ENCODE measurements at regions of chr21 and their contacts with region 1.

Region 1: DNA sequence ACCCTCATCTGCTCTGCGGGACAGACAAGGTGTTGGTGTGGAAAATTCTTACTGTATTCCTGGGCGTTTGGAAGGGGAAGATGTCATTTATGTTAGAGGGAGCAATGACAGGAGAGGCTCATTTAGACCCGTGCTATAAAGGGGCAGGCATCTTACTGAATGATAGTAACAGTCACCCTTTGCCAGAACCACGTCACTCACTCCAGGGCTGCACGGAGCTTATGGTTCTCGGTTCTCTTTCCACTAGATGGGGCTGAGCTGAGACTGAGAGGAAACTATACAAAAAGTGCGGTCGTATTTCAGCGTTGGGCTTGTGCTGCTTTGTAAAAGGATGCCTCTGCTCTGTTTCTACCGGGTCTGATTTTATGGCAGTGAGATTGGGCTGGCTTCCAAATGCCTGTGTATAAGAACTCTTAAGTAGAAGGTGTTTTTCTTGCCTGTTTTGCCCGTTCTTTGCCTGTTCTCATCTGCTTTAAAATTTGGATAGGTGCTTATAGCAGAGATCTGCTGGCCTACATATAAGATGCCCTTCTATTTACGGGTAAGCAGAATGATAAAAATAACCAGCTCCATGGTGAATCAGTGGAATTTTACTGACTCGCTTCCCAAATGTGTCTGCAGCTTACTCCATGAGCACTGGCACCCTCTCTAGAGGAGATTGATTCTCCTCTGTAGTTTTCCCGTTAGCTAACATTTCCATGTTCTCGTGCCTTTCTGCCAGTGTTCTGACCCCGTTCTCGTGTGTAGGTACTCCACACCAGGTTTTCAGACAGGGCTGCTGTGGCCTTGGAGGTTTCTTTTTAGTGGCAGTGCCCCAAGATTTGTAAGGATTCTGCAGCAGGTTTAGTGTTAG is 55.9 kb downstream of the MRPS6 start:
- DNase-seq: no peak

Region 2: DNA sequence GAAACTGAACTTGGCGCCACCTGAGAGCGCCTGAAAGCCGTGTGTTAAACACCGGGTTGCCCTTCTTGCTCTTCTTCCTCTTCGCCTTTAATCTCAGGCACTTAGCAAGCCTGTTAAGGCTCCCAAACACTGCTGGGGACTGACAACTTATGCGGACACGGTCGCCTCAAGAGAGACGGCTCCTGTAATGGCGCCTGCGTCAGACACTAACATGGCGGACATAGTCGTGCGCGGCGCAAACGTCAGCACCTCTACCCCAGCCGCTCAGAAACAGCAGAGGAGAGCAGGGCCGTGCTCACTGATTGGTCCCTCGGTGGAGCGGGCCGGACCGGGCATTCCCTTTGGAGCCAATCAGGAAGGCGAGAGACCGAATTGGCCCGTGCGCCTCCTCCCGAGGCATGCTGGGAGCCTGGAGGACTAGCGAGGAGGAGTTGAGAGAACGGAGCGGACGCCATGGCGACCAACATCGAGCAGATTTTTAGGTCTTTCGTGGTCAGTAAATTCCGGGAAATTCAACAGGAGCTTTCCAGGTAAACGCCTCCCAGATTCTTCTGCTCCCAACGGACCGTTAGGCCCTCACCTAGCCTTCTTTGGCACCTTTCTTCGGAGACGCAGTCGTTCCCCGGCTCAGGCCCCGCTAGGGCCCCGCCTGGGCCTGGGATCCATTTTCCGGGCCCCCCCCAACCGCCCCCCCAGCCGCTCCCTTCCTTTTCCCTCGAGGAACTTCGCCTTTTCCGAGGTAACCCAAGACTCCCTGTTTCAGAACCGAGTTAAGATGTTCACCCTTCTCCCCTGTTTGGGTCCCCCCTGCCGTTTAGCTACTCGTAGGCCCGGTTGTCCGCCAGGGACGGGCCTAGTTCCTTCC is 586.4 kb before region 1 on chr21 and contains the start of gene SON:
- intact Hi-C with region 1: no loop called
- DNase-seq: peak; percentile 100
- total RNA-seq, gene SON: 212 TPM

Region 3: DNA sequence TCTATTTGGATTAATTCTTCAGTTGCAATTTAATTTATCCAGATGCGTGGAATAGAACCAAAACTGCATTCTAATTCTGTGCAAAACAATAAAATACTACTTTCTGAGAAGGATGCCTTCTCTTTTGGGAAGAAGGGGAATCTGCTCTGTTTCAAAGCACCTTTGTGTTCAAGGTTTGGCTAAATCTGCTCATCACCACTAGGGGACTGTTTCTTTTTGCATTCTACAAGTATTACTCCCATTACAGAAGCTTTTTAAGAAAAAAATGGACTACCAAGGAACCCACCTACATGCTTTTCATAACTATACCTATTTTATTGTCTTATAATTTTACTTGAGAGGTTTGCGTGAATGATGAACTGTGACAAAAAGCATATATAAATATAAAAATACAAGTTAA is 37.7 kb before region 1 on chr21:
- intact Hi-C with region 1: no loop called
- DNase-seq: no peak

Region 4: DNA sequence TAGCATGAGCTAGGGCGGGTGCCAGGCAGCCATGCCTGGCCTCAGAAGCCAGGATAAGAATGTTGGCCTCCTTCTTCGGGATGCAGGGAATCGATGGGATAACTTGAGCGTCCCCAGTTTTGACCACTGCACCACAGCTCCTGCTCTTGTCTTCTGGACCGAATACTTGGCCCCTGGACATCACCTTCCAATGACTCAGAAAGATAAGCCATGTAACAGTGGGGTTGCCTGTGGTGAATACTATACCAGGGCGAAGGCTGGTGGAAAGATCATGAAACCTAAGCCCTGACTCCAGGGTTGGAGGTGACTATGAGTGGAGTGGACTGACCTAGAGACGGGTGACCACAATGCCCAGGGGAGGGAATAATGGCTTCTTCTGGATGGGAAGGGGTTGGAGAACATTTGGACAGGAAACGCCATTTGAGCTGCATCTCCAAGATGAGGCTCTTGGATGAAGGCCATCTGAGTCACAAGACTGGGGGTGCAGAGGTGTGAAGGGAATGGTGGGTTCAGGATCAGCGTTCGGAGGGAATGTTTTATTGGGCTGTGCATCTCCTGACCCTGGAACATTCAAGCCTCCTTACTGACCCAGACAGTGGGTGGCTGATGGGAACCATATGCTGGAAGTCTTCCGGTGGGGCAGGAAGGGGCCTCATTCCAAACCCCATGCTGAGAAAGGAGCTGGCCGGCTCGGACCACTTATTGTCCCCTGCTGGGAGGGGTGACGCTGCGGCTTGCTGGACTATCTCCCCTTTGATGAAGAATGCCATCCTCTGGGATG is 216.0 kb after region 1 on chr21:
- intact Hi-C with region 1: loop called (anchors 5 kb)
- DNase-seq: no peak

Measured in cardiac septum (tissue), 1 donor.